Mammary epithelial cell (primary cell): ENCODE measurements at regions of chr22 and their contacts with region 1.

Region 1: GRCh38 chr22:27107824-27108223 is 450.4 kb downstream of the MIAT start:
- DNase-seq: peak; percentile 94
- H3K4me3 ChIP-seq: no peak overlapping the region
- H3K27ac ChIP-seq: no peak overlapping the region
- H3K4me1 ChIP-seq: no peaks in the 10 kb centered on the region
- H3K27me3 ChIP-seq: peaks cover 47% of the 10 kb centered on the region
- CTCF ChIP-seq: no peak

Region 2: DNA sequence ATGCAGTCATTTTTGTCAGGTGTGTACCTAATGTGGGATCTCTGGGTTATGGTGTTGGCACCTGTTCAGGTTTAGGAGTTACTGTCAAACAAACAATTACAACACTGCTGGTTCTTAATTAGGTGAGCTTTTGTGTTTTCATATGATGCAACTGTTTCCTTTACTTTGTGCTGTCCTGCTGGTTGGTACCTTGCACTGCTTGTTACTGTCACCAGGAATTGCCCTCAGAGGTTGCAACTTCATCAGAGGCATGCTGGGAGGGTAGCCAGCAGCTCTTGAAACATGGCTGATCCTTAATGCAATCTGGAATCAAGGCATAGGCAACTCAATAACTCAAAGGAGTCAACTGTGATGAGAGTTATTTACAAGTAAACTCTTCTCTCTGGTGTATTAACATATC is 50.1 kb before region 1 on chr22:
- CTCF ChIA-PET with region 1: no interaction called
- dilution Hi-C with region 1: loop called (anchors 5 kb)
- in situ Hi-C with region 1: no loop called
- intact Hi-C with region 1: no loop called
- DNase-seq: no peak
- H3K4me3 ChIP-seq: no peak overlapping the region
- H3K27ac ChIP-seq: no peak overlapping the region
- H3K4me1 ChIP-seq: no peaks in the 10 kb centered on the region
- H3K27me3 ChIP-seq: no peaks in the 10 kb centered on the region
- CTCF ChIP-seq: no peak